Activated naive CD4-positive, alpha-beta T cell treated with anti-CD3 and anti-CD28 coated beads for 36 hours (primary cell): ENCODE measurements at regions of chr4 and their contacts with region 1.

Region 1: DNA sequence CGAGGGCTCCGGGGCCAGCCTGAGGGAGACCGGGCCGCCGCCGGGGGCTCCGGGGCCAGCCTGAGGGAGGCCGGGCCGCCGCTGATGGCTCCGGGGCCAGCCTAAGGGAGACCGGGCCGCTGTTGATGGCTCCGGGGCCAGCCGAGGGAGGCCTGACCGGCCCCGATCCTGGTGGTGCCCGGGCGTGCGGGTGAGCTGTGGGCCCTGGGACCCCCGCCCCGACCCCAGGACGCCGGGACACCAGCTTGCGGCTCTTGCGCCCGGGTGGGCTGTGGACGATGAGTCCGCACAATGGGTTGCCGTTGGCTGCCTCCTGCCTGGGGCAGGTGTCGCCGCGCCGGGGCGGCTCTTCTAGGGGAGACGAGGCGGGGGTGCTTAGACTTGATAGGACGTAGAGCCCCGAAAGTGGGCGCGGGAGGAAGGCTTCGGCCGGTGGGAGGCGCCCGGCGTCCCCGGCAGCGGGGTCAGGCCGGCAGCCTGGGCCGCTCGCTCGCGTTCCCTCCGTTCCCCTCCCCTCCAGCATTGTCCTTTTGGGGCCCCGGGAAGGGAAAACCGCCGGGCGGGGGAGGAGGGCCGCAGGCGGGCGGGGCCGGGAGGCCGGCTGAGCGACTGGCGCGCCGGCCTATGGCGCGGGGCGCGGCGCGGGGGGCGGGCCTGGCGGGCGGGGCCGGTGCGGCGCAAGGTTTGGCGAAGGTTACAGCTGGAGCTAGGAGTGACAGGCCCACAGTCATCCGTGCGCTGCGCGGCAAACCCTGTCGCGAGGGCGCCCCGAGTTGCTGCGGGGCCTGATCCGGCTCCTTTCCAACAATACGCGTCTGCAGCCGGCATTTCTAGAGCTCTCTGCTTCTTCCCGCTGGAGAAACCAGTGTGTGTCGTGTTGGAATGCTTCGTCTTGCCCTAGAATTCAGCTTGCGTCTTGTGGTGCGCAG is 790 bp downstream of the KIAA0232 start:
- DNase-seq: peak; percentile 91
- H3K4me3 Mint-ChIP-seq: peak overlapping the region; percentile 81
- H3K27ac Mint-ChIP-seq: peak overlapping the region; percentile 78
- H3K4me1 Mint-ChIP-seq: peaks cover 51% of the 10 kb centered on the region
- H3K27me3 Mint-ChIP-seq: no peaks in the 10 kb centered on the region

Region 2: GRCh38 chr4:6269616-6270511 is 513.5 kb before region 1 on chr4 and contains the start of gene WFS1:
- CTCF ChIA-PET with region 1: no interaction called
- intact Hi-C with region 1: loop called (anchors 2 kb)
- DNase-seq: peak; percentile 98
- H3K4me3 Mint-ChIP-seq: peak within 1 kb of the TSS; percentile 75
- H3K27ac Mint-ChIP-seq: no peak within 1 kb of the TSS
- H3K4me1 Mint-ChIP-seq: peaks cover 13% of the 10 kb centered on the region
- H3K27me3 Mint-ChIP-seq: peaks cover 2% of the 10 kb centered on the region
- total RNA-seq, gene WFS1: 3.6 to 4.5 TPM

Region 3: DNA sequence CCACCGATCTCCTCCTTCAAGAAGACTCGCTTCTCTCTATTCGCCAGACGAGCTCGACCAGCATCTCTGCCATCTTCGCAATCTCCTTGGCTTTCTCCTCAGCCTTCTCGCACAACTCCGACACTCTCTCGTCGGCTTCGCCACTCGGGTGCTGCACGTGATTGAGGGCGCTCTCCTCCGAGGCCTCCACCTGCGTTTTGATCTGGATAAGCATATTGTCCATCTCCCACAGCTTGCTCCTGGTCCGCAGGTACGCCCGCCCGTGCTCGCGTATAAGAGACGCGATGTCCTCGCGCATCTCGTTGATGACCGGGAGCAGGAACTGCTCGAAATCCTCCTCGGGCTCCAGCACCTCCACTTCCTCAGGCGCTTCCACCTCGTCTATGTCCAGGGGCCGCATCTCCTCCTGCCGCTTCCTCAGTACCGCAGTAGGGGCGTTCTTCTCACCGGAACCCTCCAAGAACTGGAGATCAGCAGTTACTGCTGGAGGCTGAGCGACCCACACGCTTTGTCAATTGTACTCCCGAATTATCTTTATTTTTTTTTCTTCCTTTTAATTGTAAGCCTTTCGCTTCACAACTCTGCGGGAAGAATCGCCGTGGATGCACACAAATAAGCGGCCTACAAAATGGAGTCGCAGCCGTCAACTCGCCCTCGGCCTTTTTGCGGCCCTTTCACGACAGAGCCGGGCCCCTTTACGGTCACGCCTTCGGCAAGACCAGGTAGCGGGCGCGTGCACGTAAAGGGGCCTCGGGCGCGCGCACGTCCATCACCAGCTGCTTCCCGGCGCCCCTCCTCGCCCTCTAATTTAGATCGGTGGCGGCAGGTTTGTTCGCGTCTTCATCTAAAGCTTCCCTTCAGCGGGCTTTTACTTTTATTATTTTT is 73.8 kb before region 1 on chr4 and contains the start of gene MRFAP1L1:
- CTCF ChIA-PET with region 1: no interaction called
- intact Hi-C with region 1: loop called (anchors 2 kb)
- DNase-seq: peak; percentile 98
- H3K4me3 Mint-ChIP-seq: peak within 1 kb of the TSS; percentile 98
- H3K27ac Mint-ChIP-seq: peak within 1 kb of the TSS; percentile 98
- H3K4me1 Mint-ChIP-seq: peaks cover 49% of the 10 kb centered on the region
- H3K27me3 Mint-ChIP-seq: no peaks in the 10 kb centered on the region
- total RNA-seq, gene MRFAP1L1: 37.0 to 38.6 TPM

Region 4: GRCh38 chr4:6855692-6856297 is 72.5 kb after region 1 on chr4:
- CTCF ChIA-PET with region 1: interaction called, 3 read pairs
- intact Hi-C with region 1: loop called (anchors 1 kb)
- DNase-seq: peak; percentile 65
- H3K4me3 Mint-ChIP-seq: no peak overlapping the region
- H3K27ac Mint-ChIP-seq: peak overlapping the region; percentile 85
- H3K4me1 Mint-ChIP-seq: peaks cover 25% of the 10 kb centered on the region
- H3K27me3 Mint-ChIP-seq: no peaks in the 10 kb centered on the region

Region 5: GRCh38 chr4:6986781-6987587 is 203.7 kb after region 1 on chr4:
- CTCF ChIA-PET with region 1: no interaction called
- intact Hi-C with region 1: loop called (anchors 1 kb)
- DNase-seq: peak; percentile 94
- H3K4me3 Mint-ChIP-seq: peak overlapping the region; percentile 94
- H3K27ac Mint-ChIP-seq: peak overlapping the region; percentile 93
- H3K4me1 Mint-ChIP-seq: peaks cover 70% of the 10 kb centered on the region
- H3K27me3 Mint-ChIP-seq: no peaks in the 10 kb centered on the region